CD4-positive, alpha-beta memory T cell (primary cell): ENCODE measurements at regions of chr19 and their contacts with region 1.

Region 1: GRCh38 chr19:680287-681028 is 4.3 kb downstream of the FSTL3 start:
- DNase-seq: peak; percentile 96 to 100 (median 98)
- H3K4me3 ChIP-seq: peak overlapping the region; percentile 34 to 76
- H3K4me3 Mint-ChIP-seq: peak overlapping the region; percentile 89 to 98 (median 94)
- H3K27ac ChIP-seq: peak overlapping the region; percentile 58
- H3K27ac Mint-ChIP-seq: peak overlapping the region; percentile 78 to 100 (median 99)
- H3K4me1 ChIP-seq: peaks cover 13% of the 10 kb centered on the region
- H3K4me1 Mint-ChIP-seq: peaks cover 0 to 6% (median 1%) of the 10 kb centered on the region in 4 donors
- H3K27me3 ChIP-seq: peaks cover 5% of the 10 kb centered on the region
- H3K27me3 Mint-ChIP-seq: peaks cover 3 to 7% of the 10 kb centered on the region in 2 donors

Region 2: GRCh38 chr19:548841-549830 is 131.3 kb before region 1 on chr19:
- CTCF ChIA-PET with region 1: no interaction called
- POLR2A ChIA-PET with region 1: no interaction called
- intact Hi-C with region 1: no loop called
- DNase-seq: no peak
- H3K4me3 ChIP-seq: no peak overlapping the region
- H3K4me3 Mint-ChIP-seq: no peak overlapping the region
- H3K27ac ChIP-seq: no peak overlapping the region
- H3K27ac Mint-ChIP-seq: no peak overlapping the region
- H3K4me1 ChIP-seq: peaks cover 11% of the 10 kb centered on the region
- H3K4me1 Mint-ChIP-seq: peaks cover 7 to 17% (median 9%) of the 10 kb centered on the region in 4 donors
- H3K27me3 ChIP-seq: no peaks in the 10 kb centered on the region
- H3K27me3 Mint-ChIP-seq: no peaks in the 10 kb centered on the region

Region 3: GRCh38 chr19:633068-633785 is 47.2 kb before region 1 on chr19 and contains the start of gene POLRMT:
- CTCF ChIA-PET with region 1: interaction called, 6 read pairs
- POLR2A ChIA-PET with region 1: interaction called, 4 read pairs
- intact Hi-C with region 1: loop called (anchors 1 kb)
- DNase-seq: peak; percentile 94 to 96 (median 96)
- H3K4me3 ChIP-seq: peak within 1 kb of the TSS; percentile 61 to 86
- H3K4me3 Mint-ChIP-seq: peak within 1 kb of the TSS; percentile 90 to 98 (median 96)
- H3K27ac ChIP-seq: peak within 1 kb of the TSS; percentile 71
- H3K27ac Mint-ChIP-seq: peak within 1 kb of the TSS; percentile 94 to 98 (median 97)
- H3K4me1 ChIP-seq: peaks cover 22% of the 10 kb centered on the region
- H3K4me1 Mint-ChIP-seq: peaks cover 2 to 49% (median 24%) of the 10 kb centered on the region in 4 donors
- H3K27me3 ChIP-seq: no peaks in the 10 kb centered on the region
- H3K27me3 Mint-ChIP-seq: no peaks in the 10 kb centered on the region
- total RNA-seq, gene POLRMT: 98.9 to 103 TPM

Region 4: GRCh38 chr19:645641-646478 is 34.6 kb before region 1 on chr19:
- CTCF ChIA-PET with region 1: no interaction called
- POLR2A ChIA-PET with region 1: no interaction called
- intact Hi-C with region 1: no loop called
- DNase-seq: no peak
- H3K4me3 ChIP-seq: no peak overlapping the region
- H3K4me3 Mint-ChIP-seq: no peak overlapping the region
- H3K27ac ChIP-seq: no peak overlapping the region
- H3K27ac Mint-ChIP-seq: peak overlapping the region in 1 of 7 donors; percentile 46
- H3K4me1 ChIP-seq: no peaks in the 10 kb centered on the region
- H3K4me1 Mint-ChIP-seq: peaks cover 0 to 3% (median 0%) of the 10 kb centered on the region in 4 donors
- H3K27me3 ChIP-seq: no peaks in the 10 kb centered on the region
- H3K27me3 Mint-ChIP-seq: no peaks in the 10 kb centered on the region

Region 5: DNA sequence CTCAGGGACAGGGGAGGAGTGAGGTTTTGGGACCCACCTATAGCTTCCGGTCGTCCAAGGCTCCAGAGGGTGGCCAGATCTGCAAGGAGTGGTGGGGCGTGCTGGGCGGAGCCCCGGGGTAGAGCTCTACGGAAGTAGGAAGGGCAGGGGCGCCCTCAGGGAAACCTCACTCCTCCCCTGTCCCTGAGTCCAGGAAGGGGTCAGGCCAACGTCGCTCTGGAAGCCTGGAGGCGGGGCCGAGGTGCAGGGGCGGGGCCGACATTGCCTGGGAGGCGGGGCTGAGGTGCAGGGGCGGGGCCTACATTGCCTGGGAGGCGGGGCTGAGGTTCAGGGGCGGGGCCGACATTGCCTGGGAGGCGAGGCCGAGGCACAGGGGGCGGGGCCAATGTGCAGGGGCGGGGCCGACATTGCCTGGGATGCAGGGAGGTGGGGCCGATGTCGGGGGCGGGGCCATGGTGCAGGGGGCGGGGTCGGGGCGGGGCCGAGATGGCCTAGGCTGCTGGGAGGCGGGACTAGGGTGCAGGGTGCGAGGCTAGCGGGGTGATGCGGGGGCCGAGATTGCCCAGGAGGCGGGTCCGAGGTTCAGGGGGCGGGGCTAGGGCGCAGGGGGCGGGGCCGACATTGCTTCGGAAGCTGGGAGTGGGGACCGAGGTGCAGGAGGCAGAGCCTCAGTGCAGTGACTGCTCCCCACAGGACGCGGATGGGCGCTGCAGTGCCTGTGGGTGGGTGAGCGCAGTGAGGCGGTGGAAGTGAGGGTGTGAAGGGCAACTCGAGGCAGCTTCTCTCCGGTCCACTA is 23.4 kb after region 1 on chr19:
- CTCF ChIA-PET with region 1: no interaction called
- POLR2A ChIA-PET with region 1: interaction called, 6 read pairs
- intact Hi-C with region 1: loop called (anchors 2 kb)
- DNase-seq: peak; percentile 44 to 69 (median 48)
- H3K4me3 ChIP-seq: no peak overlapping the region
- H3K4me3 Mint-ChIP-seq: peak overlapping the region in 4 of 8 donors; percentile 23 to 64 (median 45)
- H3K27ac ChIP-seq: no peak overlapping the region
- H3K27ac Mint-ChIP-seq: peak overlapping the region in 1 of 7 donors; percentile 48
- H3K4me1 ChIP-seq: peaks cover 7% of the 10 kb centered on the region
- H3K4me1 Mint-ChIP-seq: peaks cover 4 to 14% (median 8%) of the 10 kb centered on the region in 4 donors
- H3K27me3 ChIP-seq: no peaks in the 10 kb centered on the region
- H3K27me3 Mint-ChIP-seq: peaks cover 10 to 17% of the 10 kb centered on the region in 2 donors